ENCODE measurements at regions of chr14 and their contacts with region 1.

Region 1: GRCh38 chr14:73295198-73295796 is 58.0 kb downstream of the PAPLN start:
- DNase-seq: no peak
- ATAC-seq: no peak

Region 2: GRCh38 chr14:72503696-72504368 is 791.5 kb before region 1 on chr14:
- intact Hi-C with region 1: no loop called
- DNase-seq: no peak
- ATAC-seq: no peak

Region 3: DNA sequence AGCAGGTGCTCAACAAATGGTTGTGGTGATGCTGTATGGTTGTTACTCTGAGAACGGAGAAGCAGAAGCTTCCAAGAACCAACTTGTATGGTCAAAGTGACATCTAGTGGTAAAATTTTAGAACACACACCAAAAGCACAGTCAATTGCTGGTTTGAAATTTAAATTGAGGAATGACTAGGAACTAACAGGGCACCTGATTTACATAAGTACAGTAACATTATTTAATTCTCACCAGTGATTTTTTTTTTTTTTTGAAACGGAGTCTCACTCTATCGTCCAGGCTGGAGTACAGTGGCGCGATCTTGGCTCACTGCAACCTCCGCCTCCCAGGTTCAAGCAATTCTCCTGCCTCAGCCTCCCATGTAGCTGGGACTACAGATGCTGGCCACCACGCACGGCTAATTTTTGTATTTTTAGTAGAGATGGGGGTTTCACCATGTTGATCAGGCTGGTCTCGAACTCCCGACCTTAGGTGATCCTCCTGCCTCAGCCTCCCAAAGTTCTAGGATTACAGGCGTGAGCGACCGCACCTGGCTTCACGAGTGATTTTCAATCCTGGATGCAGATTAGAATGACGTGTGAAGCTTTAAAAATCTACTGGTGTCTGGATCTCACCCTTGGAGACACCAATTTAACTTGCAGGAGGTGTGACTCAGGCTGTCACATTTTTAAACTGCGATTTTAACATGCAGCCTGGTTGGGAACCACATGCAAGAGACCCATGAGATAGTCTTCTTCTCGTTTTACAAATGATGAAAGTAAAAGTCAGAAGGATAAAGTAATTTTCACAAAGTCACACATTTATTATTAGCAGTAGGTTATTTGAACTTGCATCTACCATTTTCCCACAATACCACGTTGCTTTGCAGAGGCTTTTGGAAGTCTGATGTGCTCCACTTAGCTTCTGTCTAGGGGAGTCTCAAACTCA is 177.2 kb after region 1 on chr14:
- intact Hi-C with region 1: loop called (anchors 5 kb)
- DNase-seq: no peak
- ATAC-seq: peak; percentile 83